Activated CD8-positive, alpha-beta memory T cell treated with anti-CD3 and anti-CD28 coated beads, Interleukin-2, amount 10 ng/mL, durations not matched to agents 7 days and 5 days (primary cell): ENCODE measurements at regions of chr5 and their contacts with region 1.

Region 1: DNA sequence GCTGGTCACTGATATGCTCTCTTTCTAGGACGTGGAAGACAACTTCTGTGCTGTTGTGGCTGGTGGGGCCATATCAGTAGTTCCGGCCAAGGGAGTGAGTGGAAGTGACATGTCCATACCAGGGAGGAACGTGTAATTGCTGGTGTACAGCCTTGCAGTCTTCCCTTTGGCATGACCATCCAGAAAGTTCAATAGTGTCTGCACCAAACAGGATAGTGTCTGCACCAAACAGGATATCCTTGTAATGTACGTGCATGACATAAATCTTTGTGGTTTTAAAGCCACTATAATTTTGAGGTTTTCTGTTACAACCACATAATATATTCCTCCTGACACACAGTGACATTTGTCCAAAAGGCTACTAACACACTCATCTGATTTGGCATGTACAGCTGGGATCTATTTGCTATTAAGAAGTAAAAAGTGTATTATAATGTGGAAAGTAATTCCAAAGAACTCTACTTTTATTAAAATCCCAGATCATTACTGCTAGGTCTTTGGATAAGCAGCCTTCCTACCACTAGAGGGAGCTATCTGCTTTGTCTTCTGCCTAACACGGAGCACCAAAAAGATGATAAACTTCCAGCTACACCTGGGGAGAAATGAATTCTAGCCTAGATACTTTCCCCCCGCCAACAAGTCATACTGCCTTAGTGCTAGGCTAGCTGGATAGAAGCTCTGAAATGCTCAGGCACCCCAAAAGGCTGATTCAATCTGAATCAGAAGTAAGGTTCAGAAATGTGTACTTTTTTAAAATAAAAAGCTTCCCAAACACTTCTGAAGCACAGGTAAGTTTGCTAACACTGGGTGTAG is 52.7 kb downstream of the RNF145 start:
- DNase-seq: peak; percentile 46
- ATAC-seq: peak; percentile 86
- H3K4me3 Mint-ChIP-seq: no peak overlapping the region
- H3K27ac Mint-ChIP-seq: no peak overlapping the region
- H3K4me1 Mint-ChIP-seq: peaks cover 17% of the 10 kb centered on the region
- H3K27me3 Mint-ChIP-seq: no peaks in the 10 kb centered on the region

Region 2: GRCh38 chr5:159139802-159140201 is 16.8 kb before region 1 on chr5:
- CTCF ChIA-PET with region 1: no interaction called
- DNase-seq: no peak
- ATAC-seq: no peak
- H3K4me3 Mint-ChIP-seq: no peak overlapping the region
- H3K27ac Mint-ChIP-seq: no peak overlapping the region
- H3K4me1 Mint-ChIP-seq: no peaks in the 10 kb centered on the region
- H3K27me3 Mint-ChIP-seq: peaks cover 42% of the 10 kb centered on the region

Region 3: GRCh38 chr5:159189029-159189709 is 32.5 kb after region 1 on chr5:
- CTCF ChIA-PET with region 1: interaction called, 22 read pairs
- DNase-seq: no peak
- ATAC-seq: no peak
- H3K4me3 Mint-ChIP-seq: no peak overlapping the region
- H3K27ac Mint-ChIP-seq: no peak overlapping the region
- H3K4me1 Mint-ChIP-seq: peaks cover 34% of the 10 kb centered on the region
- H3K27me3 Mint-ChIP-seq: no peaks in the 10 kb centered on the region

Region 4: DNA sequence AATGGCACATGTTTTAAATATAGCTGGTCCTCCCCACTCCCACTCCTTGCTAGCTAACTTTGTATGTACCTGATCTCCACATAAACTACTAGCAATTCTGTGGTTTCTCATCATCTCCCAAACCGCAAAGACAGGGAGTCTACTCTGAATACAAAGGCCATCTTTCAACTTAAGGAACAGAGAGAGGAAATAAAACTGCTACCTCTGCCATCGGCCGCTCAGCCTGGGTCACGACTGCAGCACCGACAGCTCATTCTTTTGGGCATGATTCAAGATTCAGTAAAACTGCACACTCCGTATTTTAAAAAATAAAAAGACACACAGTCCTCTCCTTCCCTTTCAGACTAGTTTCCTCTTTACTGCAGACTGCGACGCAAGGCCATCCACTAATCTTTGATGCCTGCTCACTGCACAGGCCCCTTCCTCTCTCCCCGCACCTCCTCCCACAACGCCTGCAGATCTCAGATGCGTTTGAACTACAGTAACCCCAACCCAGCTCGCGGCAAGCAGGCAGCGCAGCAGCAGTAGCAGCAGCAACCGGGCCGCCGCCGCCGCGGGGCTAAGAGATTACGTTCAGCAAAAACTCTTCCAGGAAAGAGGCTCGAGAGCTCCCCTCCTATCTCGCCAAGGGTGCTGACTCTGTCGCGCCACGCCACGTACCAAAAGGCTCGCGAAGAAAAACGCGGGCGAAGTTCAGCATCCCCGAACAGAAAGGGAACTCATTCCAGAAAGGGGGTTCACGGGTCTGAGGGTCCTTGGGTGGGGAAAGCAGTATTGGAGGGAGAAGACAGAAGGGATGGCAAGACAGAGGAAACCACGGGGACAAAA is 51.3 kb after region 1 on chr5:
- CTCF ChIA-PET with region 1: interaction called, 16 read pairs
- DNase-seq: peak; percentile 86
- ATAC-seq: peak; percentile 56
- H3K4me3 Mint-ChIP-seq: peak overlapping the region; percentile 98
- H3K27ac Mint-ChIP-seq: peak overlapping the region; percentile 99
- H3K4me1 Mint-ChIP-seq: peaks cover 48% of the 10 kb centered on the region
- H3K27me3 Mint-ChIP-seq: no peaks in the 10 kb centered on the region

Region 5: DNA sequence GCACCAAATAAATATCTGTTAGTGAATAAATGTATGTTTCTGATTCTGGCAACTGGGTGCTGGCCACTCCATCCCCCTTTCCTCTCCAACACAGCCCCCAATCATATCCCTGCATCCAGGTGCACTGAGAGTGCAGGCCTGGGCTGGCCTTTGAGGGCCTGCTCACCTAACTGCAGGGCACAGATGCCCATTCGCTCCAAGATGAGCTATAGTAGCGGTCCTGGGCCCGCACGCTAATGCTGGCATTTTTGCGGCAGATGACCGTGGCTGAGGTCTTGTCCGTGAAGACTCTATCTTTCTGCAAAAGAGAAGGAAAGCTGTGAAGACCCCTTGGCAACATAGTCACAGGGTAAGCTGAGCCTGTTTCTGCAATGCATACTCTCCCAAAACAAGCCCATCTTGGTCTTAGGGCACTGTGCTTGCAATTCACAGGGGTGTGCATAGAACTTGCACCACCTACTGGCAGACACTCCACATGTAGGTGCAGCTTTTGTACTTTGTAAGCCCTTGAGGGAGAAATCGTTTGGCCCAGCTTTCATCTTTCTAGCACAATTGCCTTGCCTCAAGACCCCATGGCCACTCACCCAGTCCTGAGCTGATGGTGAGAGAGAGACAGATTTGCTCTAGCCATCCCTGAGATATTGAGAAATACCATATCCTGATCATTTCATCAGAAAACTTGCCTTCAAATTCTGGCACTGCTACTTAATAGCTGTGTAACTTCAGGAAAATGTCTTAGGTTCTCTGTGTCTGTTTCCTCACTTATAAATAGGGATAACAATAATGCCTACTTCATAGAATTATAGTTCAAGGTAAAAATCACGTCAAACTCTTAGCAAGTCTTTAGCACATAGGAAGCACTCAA is 160.1 kb after region 1 on chr5:
- CTCF ChIA-PET with region 1: interaction called, 58 read pairs
- DNase-seq: peak; percentile 60
- ATAC-seq: peak; percentile 70
- H3K4me3 Mint-ChIP-seq: no peak overlapping the region
- H3K27ac Mint-ChIP-seq: no peak overlapping the region
- H3K4me1 Mint-ChIP-seq: no peaks in the 10 kb centered on the region
- H3K27me3 Mint-ChIP-seq: peaks cover 30% of the 10 kb centered on the region

Region 6: GRCh38 chr5:159412284-159413046 is 255.8 kb after region 1 on chr5:
- CTCF ChIA-PET with region 1: interaction called, 11 read pairs
- DNase-seq: peak; percentile 91
- ATAC-seq: peak; percentile 89
- H3K4me3 Mint-ChIP-seq: peak overlapping the region; percentile 1
- H3K27ac Mint-ChIP-seq: peak overlapping the region; percentile 79
- H3K4me1 Mint-ChIP-seq: peaks cover 55% of the 10 kb centered on the region
- H3K27me3 Mint-ChIP-seq: peaks cover 58% of the 10 kb centered on the region